ENCODE measurements at regions of chr5 and their contacts with region 1.

Region 1: DNA sequence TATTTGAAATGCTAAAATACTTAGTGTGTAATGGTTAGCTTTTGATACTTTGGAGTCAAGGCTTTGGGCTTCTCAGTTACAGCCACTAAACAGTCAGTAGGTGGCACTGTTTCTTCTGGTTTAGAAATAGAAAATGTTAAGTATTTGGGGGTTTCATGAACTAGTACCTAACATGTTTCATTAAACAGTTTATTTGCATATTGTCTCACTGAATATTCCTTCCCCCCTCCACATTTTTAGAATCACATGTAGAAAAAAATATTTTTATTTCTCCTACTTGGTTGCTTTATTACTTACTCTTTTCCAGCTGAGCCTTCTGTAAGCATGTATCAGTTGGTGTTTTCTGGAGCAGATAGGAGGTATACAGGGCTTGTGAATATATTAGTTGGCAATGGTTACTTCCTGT is 48.0 kb downstream of the IPO11 start:
- DNase-seq: no peak
- ATAC-seq: peak; percentile 61
- H3K4me3 ChIP-seq: no peak overlapping the region
- H3K27ac ChIP-seq: no peak overlapping the region
- H3K4me1 ChIP-seq: peaks cover 0 to 5% of the 10 kb centered on the region in 2 experiments; a peak in 1 of 4 replicates
- H3K27me3 ChIP-seq: no peaks in the 10 kb centered on the region
- CTCF ChIP-seq: peak; percentile 31 to 83 (median 82); a peak in 5 of 6 replicates
- POLR2A ChIP-seq: no peak
- RAD21 ChIP-seq: peak; percentile 71

Region 2: DNA sequence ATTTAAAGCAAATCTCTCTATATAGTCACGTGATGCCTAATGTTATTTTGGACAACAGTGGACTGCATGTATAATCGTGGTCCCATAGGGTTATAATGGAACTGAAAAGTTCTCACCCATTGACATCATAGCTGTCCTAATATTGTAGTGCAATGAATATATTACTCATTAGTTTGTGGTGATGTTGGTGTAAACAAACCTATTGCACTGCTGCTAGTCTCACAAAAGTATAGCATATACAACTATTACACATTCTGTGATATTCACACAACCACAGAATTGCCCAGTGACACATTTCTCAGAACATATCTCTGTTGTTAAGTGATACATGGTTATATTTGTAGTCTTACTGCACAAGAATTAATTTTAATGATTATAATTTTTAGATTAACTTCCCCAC is 10.3 kb before region 1 on chr5:
- CTCF ChIA-PET with region 1: interaction called, 10 read pairs
- POLR2A ChIA-PET with region 1: no interaction called
- RAD21 ChIA-PET with region 1: no interaction called
- intact Hi-C with region 1: no loop called
- DNase-seq: no peak
- ATAC-seq: no peak
- H3K4me3 ChIP-seq: no peak overlapping the region
- H3K27ac ChIP-seq: no peak overlapping the region
- H3K4me1 ChIP-seq: no peaks in the 10 kb centered on the region
- H3K27me3 ChIP-seq: no peaks in the 10 kb centered on the region
- CTCF ChIP-seq: no peak
- POLR2A ChIP-seq: no peak
- RAD21 ChIP-seq: no peak

Region 3: DNA sequence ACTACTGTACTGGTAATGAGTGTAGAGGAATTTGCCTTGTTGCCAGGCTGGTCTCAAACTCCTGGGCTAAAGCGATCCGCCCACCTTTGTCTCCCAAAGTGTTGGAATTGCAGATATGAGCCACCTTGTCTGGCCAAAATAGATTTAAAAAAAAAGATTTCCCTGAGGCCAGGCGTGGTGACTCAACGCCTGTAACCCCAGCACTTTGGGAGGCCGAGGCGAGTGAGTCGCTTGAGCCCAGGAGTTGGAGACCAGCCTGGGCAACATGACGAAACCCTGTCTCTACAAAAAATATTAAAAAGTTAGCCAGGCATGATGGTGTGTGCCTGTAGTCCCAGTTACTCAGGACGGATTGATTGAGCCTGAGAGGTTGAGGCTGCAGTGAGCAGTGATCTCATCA is 14.5 kb after region 1 on chr5:
- CTCF ChIA-PET with region 1: interaction called, 18 read pairs
- POLR2A ChIA-PET with region 1: interaction called, 4 read pairs
- RAD21 ChIA-PET with region 1: interaction called in 1 of 2 experiments, 3 read pairs
- intact Hi-C with region 1: no loop called
- DNase-seq: peak; percentile 29
- ATAC-seq: peak; percentile 87
- H3K4me3 ChIP-seq: no peak overlapping the region
- H3K27ac ChIP-seq: peak overlapping the region; percentile 30; the same call in 1 of the 2 replicates
- H3K4me1 ChIP-seq: peaks cover 13 to 35% of the 10 kb centered on the region in 2 experiments
- H3K27me3 ChIP-seq: no peaks in the 10 kb centered on the region
- CTCF ChIP-seq: no peak
- POLR2A ChIP-seq: no peak
- RAD21 ChIP-seq: no peak

Region 4: GRCh38 chr5:62779010-62779422 is 318.4 kb after region 1 on chr5:
- CTCF ChIA-PET with region 1: interaction called, 20 read pairs
- POLR2A ChIA-PET with region 1: no interaction called
- RAD21 ChIA-PET with region 1: interaction called in 1 of 2 experiments, 4 read pairs
- intact Hi-C with region 1: loop called (anchors 1 kb)
- DNase-seq: peak; percentile 48
- ATAC-seq: peak; percentile 98
- H3K4me3 ChIP-seq: no peak overlapping the region
- H3K27ac ChIP-seq: no peak overlapping the region
- H3K4me1 ChIP-seq: no peaks in the 10 kb centered on the region
- H3K27me3 ChIP-seq: no peaks in the 10 kb centered on the region
- CTCF ChIP-seq: peak; percentile 54 to 75 (median 70); a peak in 5 of 6 replicates
- POLR2A ChIP-seq: no peak
- RAD21 ChIP-seq: peak; percentile 72

Measured in HCT116 (cell line).